Cardiac septum (tissue), 1 donor: ENCODE measurements at regions of chr22 and their contacts with region 1.

Region 1: GRCh38 chr22:41697126-41697775 is 2.1 kb upstream of the MEI1 start:
- DNase-seq: peak; percentile 92

Region 2: GRCh38 chr22:41301105-41302020 is 395.9 kb before region 1 on chr22 and contains the start of gene ZC3H7B:
- intact Hi-C with region 1: no loop called
- DNase-seq: peak; percentile 94
- total RNA-seq, gene ZC3H7B: 37.2 TPM

Region 3: GRCh38 chr22:41656556-41656955 is 40.7 kb before region 1 on chr22:
- intact Hi-C with region 1: no loop called
- DNase-seq: no peak

Region 4: DNA sequence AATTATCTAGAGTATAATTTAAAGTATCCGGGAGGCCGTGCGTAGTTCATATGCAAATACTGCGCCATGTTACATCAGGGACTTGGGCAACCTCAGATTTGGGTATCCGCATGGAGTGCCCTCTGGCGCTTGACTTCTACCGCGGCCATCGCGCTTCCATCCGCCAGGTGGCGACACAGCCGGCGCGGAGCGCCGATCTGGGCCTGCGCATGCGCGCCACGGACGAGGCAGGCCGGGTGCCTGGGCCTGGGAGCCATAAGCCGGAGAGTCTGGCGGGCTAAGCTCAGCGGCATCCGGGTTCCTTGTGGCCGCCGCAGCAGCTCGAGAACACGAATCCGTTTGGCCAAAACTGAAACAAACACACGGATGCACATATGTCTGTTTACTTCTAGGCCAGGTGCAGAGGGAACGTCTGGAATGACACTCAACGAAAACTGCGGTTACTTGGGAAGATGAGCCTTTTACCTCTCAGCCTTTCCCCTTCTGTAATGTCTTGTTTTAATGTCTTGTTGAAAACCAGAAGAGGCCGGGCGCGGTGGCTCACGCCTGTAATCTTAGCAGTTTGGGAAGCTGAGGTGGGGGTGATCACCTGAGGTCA is 30.5 kb before region 1 on chr22:
- intact Hi-C with region 1: loop called (anchors 2 kb)
- DNase-seq: peak; percentile 96